Stomach (tissue), 19 donors: ENCODE measurements at regions of chr19 and their contacts with region 1.

Region 1: GRCh38 chr19:7293795-7294570 is at the start of gene INSR:
- DNase-seq: peak; percentile 91 to 97
- H3K4me3 ChIP-seq: peak within 1 kb of the TSS; percentile 82 to 100 (median 96)
- H3K27ac ChIP-seq: peak within 1 kb of the TSS; percentile 87 to 96 (median 92)
- H3K4me1 ChIP-seq: peaks cover 6 to 50% (median 36%) of the 10 kb centered on the region in 4 donors
- H3K27me3 ChIP-seq: peaks cover 0 to 4% (median 0%) of the 10 kb centered on the region in 3 donors
- CTCF ChIP-seq: no peak
- EP300 ChIP-seq: no peak
- POLR2A ChIP-seq: no peak
- total RNA-seq, gene INSR: 50.4 to 513 (median 90.4) TPM

Region 2: GRCh38 chr19:7197760-7198696 is 96.0 kb before region 1 on chr19:
- intact Hi-C with region 1: loop called (anchors 5 kb)
- DNase-seq: peak; percentile 95 to 98
- H3K4me3 ChIP-seq: peak overlapping the region; percentile 66 to 79 (median 72)
- H3K27ac ChIP-seq: peak overlapping the region; percentile 85 to 96 (median 90)
- H3K4me1 ChIP-seq: peaks cover 14 to 42% (median 32%) of the 10 kb centered on the region in 4 donors
- H3K27me3 ChIP-seq: no peaks in the 10 kb centered on the region
- CTCF ChIP-seq: peak in 4 of 7 experiments; percentile 13 to 32 (median 20)
- EP300 ChIP-seq: no peak
- POLR2A ChIP-seq: no peak

Region 3: GRCh38 chr19:7360393-7360984 is 66.5 kb after region 1 on chr19:
- intact Hi-C with region 1: no loop called
- DNase-seq: peak in 1 of 2 donors; percentile 74
- H3K4me3 ChIP-seq: no peak overlapping the region
- H3K27ac ChIP-seq: peak overlapping the region in 1 of 5 donors; percentile 38
- H3K4me1 ChIP-seq: no peaks in the 10 kb centered on the region
- H3K27me3 ChIP-seq: no peaks in the 10 kb centered on the region
- CTCF ChIP-seq: no peak
- EP300 ChIP-seq: no peak
- POLR2A ChIP-seq: no peak

Region 4: DNA sequence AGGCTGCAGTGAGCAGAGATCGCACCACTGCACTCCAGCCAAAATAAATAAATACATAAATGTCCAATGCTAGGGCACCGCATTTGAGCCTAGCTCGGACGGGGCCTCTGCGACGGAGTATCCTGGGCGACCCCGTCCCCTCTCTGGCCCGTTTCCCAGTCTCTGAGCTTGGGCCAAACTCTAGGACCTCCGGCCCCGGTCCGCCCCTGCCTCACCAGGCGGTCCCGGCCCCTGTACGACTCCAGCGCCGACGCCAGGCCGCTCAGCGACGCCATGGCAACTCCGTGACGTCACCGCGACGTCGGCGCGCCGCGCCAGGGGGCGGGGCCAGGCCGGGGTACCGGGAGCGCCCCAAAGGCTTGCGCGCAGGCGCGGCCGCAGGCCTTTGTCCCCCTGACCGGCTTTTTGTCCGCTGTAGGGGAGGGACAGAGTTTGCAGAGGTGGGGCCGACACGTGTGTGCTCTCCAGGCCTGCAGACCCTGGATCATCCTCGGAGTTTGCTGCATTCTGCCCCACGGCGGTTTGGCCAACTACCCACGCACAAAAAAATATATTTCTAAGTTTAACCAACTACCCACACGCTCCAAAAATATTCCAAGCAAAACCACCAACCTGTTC is 194.9 kb after region 1 on chr19 and contains the start of gene PEX11G:
- intact Hi-C with region 1: no loop called
- DNase-seq: peak; percentile 96 to 98
- H3K4me3 ChIP-seq: peak within 1 kb of the TSS; percentile 45 to 67 (median 59)
- H3K27ac ChIP-seq: peak within 1 kb of the TSS; percentile 87 to 93 (median 90)
- H3K4me1 ChIP-seq: peaks cover 14 to 25% (median 18%) of the 10 kb centered on the region in 4 donors
- H3K27me3 ChIP-seq: no peaks in the 10 kb centered on the region
- CTCF ChIP-seq: no peak
- EP300 ChIP-seq: no peak
- POLR2A ChIP-seq: no peak
- total RNA-seq, gene PEX11G: 3.9 to 5.2 TPM in 2 of 5 donors, not detected in the others